MCF 10A (cell line): ENCODE measurements at regions of chr20 and their contacts with region 1.

Region 1: GRCh38 chr20:45946149-45946970 is 11.9 kb downstream of the PCIF1 start:
- DNase-seq: peak; percentile 74
- H3K4me3 Mint-ChIP-seq: peak overlapping the region; percentile 21
- H3K27ac Mint-ChIP-seq: peak overlapping the region; percentile 85
- H3K4me1 Mint-ChIP-seq: peaks cover 24% of the 10 kb centered on the region
- H3K27me3 Mint-ChIP-seq: no peaks in the 10 kb centered on the region
- CTCF ChIP-seq: no peak

Region 2: GRCh38 chr20:45857114-45857881 is 89.1 kb before region 1 on chr20 and contains the starts of genes ACOT8 and ZSWIM3:
- CTCF ChIA-PET with region 1: no interaction called
- POLR2A ChIA-PET with region 1: interaction called, 14 read pairs
- intact Hi-C with region 1: no loop called
- DNase-seq: peak; percentile 100
- H3K4me3 Mint-ChIP-seq: peak within 1 kb of the TSS; percentile 92
- H3K27ac Mint-ChIP-seq: peak within 1 kb of the TSS; percentile 92
- H3K4me1 Mint-ChIP-seq: peaks cover 16% of the 10 kb centered on the region
- H3K27me3 Mint-ChIP-seq: no peaks in the 10 kb centered on the region
- CTCF ChIP-seq: no peak
- total RNA-seq, gene ACOT8: 19.5 and 20.1 TPM in 2 replicates
- total RNA-seq, gene ZSWIM3: 1.4 and 2.4 TPM in 2 replicates

Region 3: GRCh38 chr20:45890985-45891983 is 55.1 kb before region 1 on chr20 and contains the starts of genes CTSA and NEURL2:
- CTCF ChIA-PET with region 1: no interaction called
- POLR2A ChIA-PET with region 1: interaction called, 12 read pairs
- intact Hi-C with region 1: no loop called
- DNase-seq: peak; percentile 89
- H3K4me3 Mint-ChIP-seq: peak within 1 kb of the TSS; percentile 95
- H3K27ac Mint-ChIP-seq: peak within 1 kb of the TSS; percentile 86
- H3K4me1 Mint-ChIP-seq: peaks cover 6% of the 10 kb centered on the region
- H3K27me3 Mint-ChIP-seq: no peaks in the 10 kb centered on the region
- CTCF ChIP-seq: no peak
- total RNA-seq, gene CTSA: 25.3 and 39.1 TPM in 2 replicates
- total RNA-seq, gene NEURL2: 2.0 and 2.5 TPM in 2 replicates

Region 4: DNA sequence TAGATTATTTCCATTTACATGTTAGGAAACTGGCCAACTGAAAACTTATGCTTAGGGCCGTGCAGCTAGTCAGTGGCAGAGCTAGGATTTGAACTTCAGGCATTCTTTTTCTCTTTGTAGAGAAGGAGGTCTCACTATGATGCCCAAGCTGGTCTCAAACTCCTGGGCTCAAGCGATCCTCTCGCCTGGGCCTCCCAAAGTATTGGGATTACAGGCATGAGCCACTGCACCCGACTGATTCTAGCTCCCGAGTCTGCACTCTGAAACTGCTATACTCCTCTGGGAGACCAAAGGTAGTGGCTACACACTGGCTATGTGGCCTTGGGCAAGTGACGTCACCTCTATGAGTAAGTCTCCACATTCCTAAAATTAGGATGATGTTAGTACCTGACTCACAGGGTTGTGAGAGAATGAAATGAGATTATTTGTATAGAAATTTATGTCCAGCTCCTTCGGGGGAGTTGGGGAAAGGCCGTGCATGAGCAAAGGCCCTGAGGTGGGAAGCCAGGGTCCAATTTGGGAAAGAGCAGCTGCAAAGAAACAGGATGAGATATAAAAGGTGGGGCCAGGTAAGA is 40.8 kb before region 1 on chr20:
- CTCF ChIA-PET with region 1: interaction called, 4 read pairs
- POLR2A ChIA-PET with region 1: interaction called, 10 read pairs
- intact Hi-C with region 1: no loop called
- DNase-seq: peak; percentile 91
- H3K4me3 Mint-ChIP-seq: peak overlapping the region; percentile 2
- H3K27ac Mint-ChIP-seq: peak overlapping the region; percentile 55
- H3K4me1 Mint-ChIP-seq: peaks cover 9% of the 10 kb centered on the region
- H3K27me3 Mint-ChIP-seq: no peaks in the 10 kb centered on the region
- CTCF ChIP-seq: no peak

Region 5: DNA sequence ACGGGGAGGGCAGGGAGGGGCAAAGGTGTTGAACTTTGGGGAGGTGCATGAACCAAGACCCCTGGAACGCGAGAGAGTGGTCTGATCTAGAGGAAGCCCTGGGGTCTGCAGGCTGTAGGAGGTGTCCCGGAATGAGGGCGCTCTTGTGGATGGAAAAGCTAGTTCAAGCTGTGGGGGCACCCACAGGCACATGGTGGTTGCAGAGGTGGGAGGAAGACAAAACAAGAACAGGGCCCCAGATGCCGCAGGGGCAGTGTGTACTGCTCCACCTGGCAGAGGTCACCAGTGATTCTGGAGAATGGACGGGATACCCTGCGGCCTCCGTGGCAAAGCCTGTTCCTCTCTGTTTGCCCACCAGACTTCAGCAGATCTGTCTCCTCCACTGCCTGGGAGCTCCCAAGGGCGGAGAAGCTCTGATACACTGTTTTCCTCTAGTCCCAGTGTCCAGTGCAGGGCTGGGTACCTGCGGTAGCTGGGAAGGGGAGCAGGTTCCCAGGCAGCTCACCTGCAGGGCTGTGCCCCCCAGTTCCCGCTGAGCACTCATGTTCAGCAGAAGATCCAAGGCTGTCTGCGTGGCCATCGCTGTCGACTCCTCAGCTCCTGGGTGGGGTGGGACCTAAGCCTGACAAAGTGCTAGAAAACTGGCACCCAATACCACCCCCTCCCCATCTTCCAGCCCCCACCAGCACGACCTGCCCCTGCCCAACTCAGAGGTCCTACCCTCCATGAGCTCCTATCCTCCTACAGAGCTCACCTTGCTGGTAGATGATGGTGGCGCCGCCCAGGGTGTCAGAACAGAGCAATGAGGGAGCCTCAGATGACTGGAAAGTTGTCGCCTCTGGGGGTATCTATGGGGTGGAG is 11.0 kb after region 1 on chr20:
- CTCF ChIA-PET with region 1: interaction called, 26 read pairs
- POLR2A ChIA-PET with region 1: interaction called, 19 read pairs
- intact Hi-C with region 1: no loop called
- DNase-seq: no peak
- H3K4me3 Mint-ChIP-seq: no peak overlapping the region
- H3K27ac Mint-ChIP-seq: no peak overlapping the region
- H3K4me1 Mint-ChIP-seq: no peaks in the 10 kb centered on the region
- H3K27me3 Mint-ChIP-seq: no peaks in the 10 kb centered on the region
- CTCF ChIP-seq: no peak